ENCODE measurements at regions of chr6 and their contacts with region 1.

Region 1: GRCh38 chr6:127547215-127547614 is 28.1 kb upstream of the MTCL3 start:
- DNase-seq: no peak
- H3K4me3 ChIP-seq: no peak overlapping the region
- H3K27ac ChIP-seq: no peak overlapping the region
- H3K4me1 ChIP-seq: no peaks in the 10 kb centered on the region
- H3K27me3 ChIP-seq: no peaks in the 10 kb centered on the region
- CTCF ChIP-seq: no peak

Region 2: GRCh38 chr6:127302728-127303660 is 244.2 kb before region 1 on chr6:
- intact Hi-C with region 1: loop called (anchors 10 kb)
- DNase-seq: peak in 3 of 5 donors; percentile 10 to 70 (median 51)
- H3K4me3 ChIP-seq: no peak overlapping the region
- H3K27ac ChIP-seq: no peak overlapping the region
- H3K4me1 ChIP-seq: no peaks in the 10 kb centered on the region
- H3K27me3 ChIP-seq: no peaks in the 10 kb centered on the region
- CTCF ChIP-seq: peak; percentile 73

Measured in kidney (tissue), 22 donors.